ENCODE measurements at regions of chr1 and their contacts with region 1.

Region 1: DNA sequence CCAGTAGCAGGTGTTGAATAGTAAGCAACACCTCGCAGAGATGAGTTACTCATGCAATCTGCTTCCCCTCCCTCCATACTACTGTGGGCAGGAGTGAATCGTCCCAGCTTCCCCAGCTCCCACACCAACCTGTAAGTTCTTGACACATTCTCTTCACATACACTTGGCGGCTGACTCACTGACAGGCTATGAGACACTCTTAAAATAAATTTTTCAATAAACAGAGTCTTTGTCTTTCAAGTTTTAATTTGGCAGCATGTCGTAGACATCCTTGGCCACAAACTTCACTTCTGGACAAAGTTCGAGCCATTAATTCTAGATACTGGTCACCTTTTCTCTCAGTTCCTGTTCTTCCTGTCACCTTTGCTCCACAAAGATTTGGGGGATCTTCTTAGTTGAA is 290.7 kb downstream of the TM2D1 start:
- DNase-seq: peak in 2 of 3 donors; percentile 25 to 42
- H3K4me3 ChIP-seq: no peak overlapping the region
- H3K27ac ChIP-seq: no peak overlapping the region
- H3K4me1 ChIP-seq: peaks cover 8 to 25% (median 11%) of the 10 kb centered on the region in 4 experiments
- H3K27me3 ChIP-seq: no peaks in the 10 kb centered on the region

Region 2: DNA sequence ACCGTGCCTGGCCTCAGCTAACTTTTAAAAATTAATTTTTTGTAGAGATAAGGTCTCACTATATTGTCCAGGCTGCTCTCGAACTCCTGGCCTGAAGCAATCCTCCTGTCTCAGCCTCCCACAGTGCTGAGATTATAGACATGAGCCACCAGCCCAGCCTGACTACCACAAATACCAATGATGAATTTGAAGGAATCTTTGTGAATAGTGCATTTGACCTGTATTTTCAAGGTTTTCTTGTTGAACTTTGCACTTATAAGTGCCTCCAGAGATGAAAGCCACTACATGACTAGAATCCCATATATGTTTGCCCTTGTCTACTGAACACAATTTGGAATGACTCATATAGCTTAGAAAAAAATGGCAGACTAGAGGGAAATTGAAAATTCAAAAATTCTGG is 54.6 kb before region 1 on chr1:
- CTCF ChIA-PET with region 1: no interaction called
- POLR2A ChIA-PET with region 1: no interaction called
- DNase-seq: no peak
- H3K4me3 ChIP-seq: no peak overlapping the region
- H3K27ac ChIP-seq: no peak overlapping the region
- H3K4me1 ChIP-seq: no peaks in the 10 kb centered on the region
- H3K27me3 ChIP-seq: no peaks in the 10 kb centered on the region

Region 3: DNA sequence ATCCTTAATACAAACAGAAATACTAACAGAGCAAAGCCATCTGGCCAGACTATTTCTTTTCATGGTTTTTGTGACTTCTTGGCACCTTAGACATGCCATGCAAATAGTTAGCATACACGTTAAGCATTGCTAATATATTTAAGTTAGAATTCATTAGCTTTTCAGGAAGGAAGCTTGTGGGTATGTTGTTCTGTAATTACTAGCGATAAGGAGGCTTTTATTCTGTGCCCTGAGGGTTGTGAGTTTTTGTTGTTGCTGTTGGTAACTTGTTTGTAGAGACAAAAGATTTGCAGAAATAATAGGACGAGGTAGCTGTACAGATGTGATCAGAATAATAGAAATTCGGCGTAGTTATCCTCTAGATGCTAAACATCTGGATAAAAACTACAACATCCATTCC is 14.6 kb before region 1 on chr1:
- CTCF ChIA-PET with region 1: interaction called, 10 read pairs
- POLR2A ChIA-PET with region 1: interaction called, 4 read pairs
- DNase-seq: peak; percentile 40 to 89 (median 82)
- H3K4me3 ChIP-seq: peak overlapping the region in 4 of 7 experiments; percentile 4 to 52 (median 38)
- H3K27ac ChIP-seq: peak overlapping the region; percentile 65 to 80
- H3K4me1 ChIP-seq: peaks cover 5 to 36% (median 21%) of the 10 kb centered on the region in 4 experiments
- H3K27me3 ChIP-seq: no peaks in the 10 kb centered on the region

Measured in common myeloid progenitor, CD34-positive (primary cell).